Naive thymus-derived CD8-positive, alpha-beta T cell (primary cell): ENCODE measurements at regions of chr16 and their contacts with region 1.

Region 1: DNA sequence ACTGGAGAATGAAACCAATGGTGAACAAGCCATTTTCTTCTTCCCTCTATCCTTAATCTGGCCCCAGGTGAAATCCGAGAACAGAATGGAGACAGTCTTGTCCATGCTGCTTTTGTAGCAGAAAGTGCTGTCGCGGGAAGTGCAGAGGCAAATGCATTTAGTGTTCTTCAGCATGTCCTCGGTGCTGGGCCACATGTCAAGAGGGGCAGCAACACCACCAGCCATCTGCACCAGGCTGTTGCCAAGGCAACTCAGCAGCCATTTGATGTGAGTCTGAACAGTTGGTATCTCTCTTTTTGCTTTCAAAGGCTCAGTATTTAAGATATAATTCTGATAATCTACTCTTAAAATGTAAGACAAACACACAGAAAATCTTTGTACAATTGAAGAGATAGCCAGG is 18.7 kb downstream of the UQCRC2 start:
- DNase-seq: no peak
- ATAC-seq: no peak
- H3K4me3 Mint-ChIP-seq: no peak overlapping the region
- H3K27ac Mint-ChIP-seq: peak overlapping the region in 1 of 10 donors; percentile 40
- H3K4me1 Mint-ChIP-seq: peaks cover 0 to 3% (median 0%) of the 10 kb centered on the region in 4 donors
- H3K27me3 Mint-ChIP-seq: no peaks in the 10 kb centered on the region

Region 2: DNA sequence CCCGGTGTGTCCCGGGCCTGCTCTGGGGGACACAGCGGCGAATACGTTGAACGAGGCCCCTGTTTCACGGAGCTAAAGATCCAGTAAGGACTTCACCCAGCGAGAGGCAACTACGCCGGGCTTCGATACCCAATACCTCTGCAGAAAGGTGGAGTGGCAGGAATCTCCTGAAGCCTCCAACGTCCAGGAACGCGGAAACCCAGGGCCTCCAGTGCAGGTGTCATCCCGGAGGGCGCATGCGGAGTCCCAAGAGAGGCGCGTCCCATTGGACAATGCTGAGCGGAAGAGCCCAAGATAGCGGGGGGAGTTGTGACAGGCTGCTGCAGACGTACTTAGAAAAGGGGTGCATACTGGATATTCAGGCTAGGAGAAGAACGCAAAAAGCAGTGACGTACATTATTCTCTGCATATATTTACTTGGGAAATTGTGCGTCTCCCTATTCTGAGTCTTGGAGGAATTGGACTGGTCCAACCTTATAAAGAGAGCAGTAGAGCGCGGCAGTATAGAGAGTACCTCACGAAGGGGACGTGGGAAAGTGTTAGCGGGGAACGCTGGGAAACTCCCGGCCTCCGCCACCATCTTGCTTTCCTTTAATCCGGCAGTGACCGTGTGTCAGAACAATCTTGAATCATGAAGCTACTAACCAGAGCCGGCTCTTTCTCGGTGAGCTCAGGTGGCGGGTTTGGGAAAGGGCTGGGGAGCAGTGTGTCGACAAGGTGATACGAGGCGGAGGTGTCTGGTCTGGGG is 18.9 kb before region 1 on chr16 and contains the start of gene UQCRC2:
- POLR2A ChIA-PET with region 1: interaction called, 10 read pairs
- DNase-seq: peak; percentile 80 to 95 (median 86)
- ATAC-seq: peak; percentile 88 to 91
- H3K4me3 Mint-ChIP-seq: peak within 1 kb of the TSS; percentile 98 to 100 (median 100)
- H3K27ac Mint-ChIP-seq: peak within 1 kb of the TSS; percentile 98 to 100 (median 100)
- H3K4me1 Mint-ChIP-seq: peaks cover 18 to 76% (median 58%) of the 10 kb centered on the region in 4 donors
- H3K27me3 Mint-ChIP-seq: no peaks in the 10 kb centered on the region
- polyA plus RNA-seq, gene UQCRC2: 176 to 196 (median 180) TPM

Region 3: DNA sequence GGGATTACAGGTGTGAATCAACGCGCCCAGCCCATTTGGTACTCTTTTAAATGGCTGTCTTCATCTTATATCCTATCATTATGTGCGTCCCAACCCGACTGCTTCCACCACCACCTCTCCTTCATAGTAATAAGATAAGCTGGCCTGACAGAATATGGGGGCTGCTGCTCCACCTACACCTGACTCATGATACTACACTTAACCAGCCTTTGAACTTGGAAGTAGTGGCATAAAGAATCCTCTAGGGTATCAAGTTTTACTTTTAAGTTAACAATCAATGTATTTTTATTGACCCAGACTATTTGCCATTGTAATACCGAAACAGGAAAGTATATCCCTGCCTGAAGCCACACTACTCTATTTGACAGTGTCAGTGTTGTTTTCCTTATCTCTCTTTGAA is 10.3 kb after region 1 on chr16:
- POLR2A ChIA-PET with region 1: no interaction called
- DNase-seq: no peak
- ATAC-seq: peak in 1 of 2 donors; percentile 44
- H3K4me3 Mint-ChIP-seq: no peak overlapping the region
- H3K27ac Mint-ChIP-seq: peak overlapping the region in 5 of 10 donors; percentile 20 to 66 (median 41)
- H3K4me1 Mint-ChIP-seq: peaks cover 0 to 1% (median 0%) of the 10 kb centered on the region in 4 donors
- H3K27me3 Mint-ChIP-seq: no peaks in the 10 kb centered on the region